ENCODE measurements at regions of chr1 and their contacts with region 1.

Region 1: DNA sequence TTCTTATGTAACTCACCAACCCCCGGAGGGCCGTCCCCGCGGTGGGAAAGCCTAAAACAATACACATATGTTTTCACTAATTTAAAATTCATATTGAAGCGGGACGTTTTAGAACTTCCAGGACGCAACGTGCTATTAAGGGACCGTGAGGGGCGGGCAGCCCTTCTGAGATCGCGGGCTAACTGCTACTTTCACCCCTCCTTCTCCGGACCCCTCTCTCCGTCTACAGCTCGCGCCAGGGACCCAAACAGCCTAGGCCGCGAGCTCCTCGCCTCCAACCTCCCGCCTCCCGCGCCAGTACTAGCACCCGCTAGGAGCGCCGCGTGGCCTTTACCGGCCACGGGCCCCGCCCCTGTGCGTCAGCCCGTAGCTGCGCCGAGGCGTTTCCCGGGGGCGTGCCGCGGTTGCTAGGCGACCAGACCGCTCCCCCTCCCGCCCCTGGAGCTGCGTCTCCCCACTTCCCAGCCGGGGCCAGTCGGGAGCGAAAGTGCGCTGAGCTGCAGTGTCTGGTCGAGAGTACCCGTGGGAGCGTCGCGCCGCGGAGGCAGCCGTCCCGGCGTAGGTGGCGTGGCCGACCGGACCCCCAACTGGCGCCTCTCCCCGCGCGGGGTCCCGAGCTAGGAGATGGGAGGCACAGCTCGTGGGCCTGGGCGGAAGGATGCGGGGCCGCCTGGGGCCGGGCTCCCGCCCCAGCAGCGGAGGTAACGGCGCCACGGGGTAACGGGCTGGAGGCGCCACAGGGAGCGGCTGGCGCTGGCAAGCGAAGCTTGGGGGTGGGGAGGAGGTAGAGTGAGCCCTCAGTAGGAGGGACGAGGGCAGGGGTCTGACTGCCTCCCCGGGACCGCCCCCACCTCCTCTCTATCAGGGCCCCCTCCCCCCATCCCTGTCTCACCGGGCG is at the start of gene DYRK3:
- DNase-seq: peak; percentile 97
- H3K4me3 ChIP-seq: peak within 1 kb of the TSS; percentile 87 to 92
- H3K27ac ChIP-seq: peak within 1 kb of the TSS; percentile 79 to 83
- H3K4me1 ChIP-seq: peaks cover 18 to 22% of the 10 kb centered on the region in 2 experiments; a peak in 3 of 4 replicates
- H3K27me3 ChIP-seq: no peaks in the 10 kb centered on the region
- CTCF ChIP-seq: no peak
- EP300 ChIP-seq: no peak; a peak in 1 of 4 replicates
- RAD21 ChIP-seq: no peak
- polyA plus RNA-seq, gene DYRK3: 3.6 and 5.8 TPM in 2 replicates

Region 2: DNA sequence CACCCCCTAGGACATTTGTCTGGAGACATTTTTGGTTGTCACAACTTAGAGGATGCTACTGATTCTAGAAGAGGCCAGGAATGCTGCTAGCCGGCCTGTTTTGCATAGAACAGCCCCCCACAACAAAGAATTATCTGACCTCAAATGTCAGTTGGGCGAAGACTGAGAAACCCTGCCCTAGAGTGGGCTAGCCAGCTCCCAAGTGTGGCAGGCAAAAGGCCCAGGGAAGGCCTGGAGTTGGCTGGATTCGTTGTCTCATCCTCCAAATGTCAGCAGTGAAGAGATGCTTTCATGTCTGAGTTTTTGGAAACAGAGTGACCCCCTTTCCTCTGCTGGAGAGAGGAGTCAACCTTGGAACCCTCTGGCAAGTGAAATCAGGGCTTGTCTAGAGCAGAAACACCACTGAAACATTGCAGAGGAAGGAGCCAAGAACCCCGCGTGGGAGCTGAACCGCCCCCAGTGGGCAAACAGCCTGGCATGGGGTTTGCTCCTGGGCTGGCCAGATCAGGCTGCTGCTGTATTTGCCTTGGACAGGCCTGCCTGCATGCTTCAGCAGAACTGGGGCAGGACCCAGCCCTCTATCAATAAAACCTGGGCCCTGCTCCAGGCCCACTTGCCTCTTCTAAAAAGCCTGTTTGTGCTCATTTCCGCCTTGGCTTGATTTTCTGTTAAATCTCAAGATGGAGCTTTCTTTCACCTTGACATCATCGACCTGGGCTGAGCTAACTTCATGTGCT is 95.1 kb before region 1 on chr1:
- CTCF ChIA-PET with region 1: no interaction called
- POLR2A ChIA-PET with region 1: no interaction called
- DNase-seq: no peak
- H3K4me3 ChIP-seq: no peak overlapping the region
- H3K27ac ChIP-seq: no peak overlapping the region
- H3K4me1 ChIP-seq: no peaks in the 10 kb centered on the region; a peak in 1 of 4 replicates
- H3K27me3 ChIP-seq: no peaks in the 10 kb centered on the region
- CTCF ChIP-seq: no peak
- EP300 ChIP-seq: no peak
- RAD21 ChIP-seq: no peak

Region 3: GRCh38 chr1:206651958-206652890 is 16.9 kb after region 1 on chr1:
- CTCF ChIA-PET with region 1: interaction called, 450 read pairs
- POLR2A ChIA-PET with region 1: interaction called, 3 read pairs
- DNase-seq: no peak
- H3K4me3 ChIP-seq: no peak overlapping the region
- H3K27ac ChIP-seq: no peak overlapping the region
- H3K4me1 ChIP-seq: peaks cover 0 to 11% of the 10 kb centered on the region in 2 experiments; a peak in 1 of 4 replicates
- H3K27me3 ChIP-seq: no peaks in the 10 kb centered on the region
- CTCF ChIP-seq: no peak
- EP300 ChIP-seq: no peak
- RAD21 ChIP-seq: no peak

Region 4: DNA sequence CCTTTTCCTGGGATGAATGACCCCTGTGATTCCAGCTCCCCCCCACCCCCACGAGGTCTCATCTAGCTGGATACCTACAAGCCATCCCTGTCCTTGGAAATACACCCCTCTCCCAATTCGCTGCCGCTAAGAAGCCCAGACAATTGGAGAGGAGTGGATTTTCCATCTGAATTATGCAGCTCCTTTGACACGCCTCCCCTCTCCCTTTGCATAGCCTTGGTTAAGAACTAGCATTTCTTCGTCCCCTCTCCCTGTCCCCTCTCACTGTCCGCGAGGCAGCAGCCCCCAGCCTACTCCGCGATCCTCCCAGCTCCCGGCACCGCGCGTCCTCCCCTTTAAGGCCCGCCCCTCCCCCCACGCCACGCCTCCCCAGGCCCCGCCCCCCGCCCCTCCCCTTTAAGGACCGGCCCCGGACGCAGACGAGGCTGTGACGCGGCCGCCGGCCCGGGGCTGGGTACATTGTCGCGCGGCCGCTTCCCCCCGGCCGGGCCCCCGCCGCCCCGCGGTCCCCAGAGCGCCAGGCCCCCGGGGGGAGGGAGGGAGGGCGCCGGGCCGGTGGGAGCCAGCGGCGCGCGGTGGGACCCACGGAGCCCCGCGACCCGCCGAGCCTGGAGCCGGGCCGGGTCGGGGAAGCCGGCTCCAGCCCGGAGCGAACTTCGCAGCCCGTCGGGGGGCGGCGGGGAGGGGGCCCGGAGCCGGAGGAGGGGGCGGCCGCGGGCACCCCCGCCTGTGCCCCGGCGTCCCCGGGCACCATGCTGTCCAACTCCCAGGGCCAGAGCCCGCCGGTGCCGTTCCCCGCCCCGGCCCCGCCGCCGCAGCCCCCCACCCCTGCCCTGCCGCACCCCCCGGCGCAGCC is 49.4 kb after region 1 on chr1 and contains the start of gene MAPKAPK2:
- CTCF ChIA-PET with region 1: interaction called, 10 read pairs
- POLR2A ChIA-PET with region 1: no interaction called
- DNase-seq: peak; percentile 99
- H3K4me3 ChIP-seq: peak within 1 kb of the TSS; percentile 87 to 90
- H3K27ac ChIP-seq: peak within 1 kb of the TSS; percentile 74 to 93
- H3K4me1 ChIP-seq: peaks cover 28 to 33% of the 10 kb centered on the region in 2 experiments
- H3K27me3 ChIP-seq: peaks cover 4% of the 10 kb centered on the region; the same call in 1 of the 2 replicates
- CTCF ChIP-seq: no peak
- EP300 ChIP-seq: no peak
- RAD21 ChIP-seq: no peak
- polyA plus RNA-seq, gene MAPKAPK2: 45.9 and 46.8 TPM in 2 replicates